Activated T-helper 1 cell treated with anti-CD3 and anti-CD28 coated beads, Interleukin-12 subunit alpha, Interleukin-12 subunit beta, Interleukin-2, Interleukin-4 antibody, amounts not matched to agents 30 ng/mL and 10 ng/mL and 1 ng/mL, durations not matched to agents 14 hours and 24 hours and 36 hours (primary cell): ENCODE measurements at regions of chr11 and their contacts with region 1.

Region 1: GRCh38 chr11:506238-506994 is 626 bp downstream of the RNH1 start:
- DNase-seq: peak; percentile 97
- H3K4me3 Mint-ChIP-seq: peak overlapping the region; percentile 92
- H3K27ac Mint-ChIP-seq: peak overlapping the region; percentile 100
- H3K4me1 Mint-ChIP-seq: peaks cover 15% of the 10 kb centered on the region
- H3K27me3 Mint-ChIP-seq: no peaks in the 10 kb centered on the region

Region 2: DNA sequence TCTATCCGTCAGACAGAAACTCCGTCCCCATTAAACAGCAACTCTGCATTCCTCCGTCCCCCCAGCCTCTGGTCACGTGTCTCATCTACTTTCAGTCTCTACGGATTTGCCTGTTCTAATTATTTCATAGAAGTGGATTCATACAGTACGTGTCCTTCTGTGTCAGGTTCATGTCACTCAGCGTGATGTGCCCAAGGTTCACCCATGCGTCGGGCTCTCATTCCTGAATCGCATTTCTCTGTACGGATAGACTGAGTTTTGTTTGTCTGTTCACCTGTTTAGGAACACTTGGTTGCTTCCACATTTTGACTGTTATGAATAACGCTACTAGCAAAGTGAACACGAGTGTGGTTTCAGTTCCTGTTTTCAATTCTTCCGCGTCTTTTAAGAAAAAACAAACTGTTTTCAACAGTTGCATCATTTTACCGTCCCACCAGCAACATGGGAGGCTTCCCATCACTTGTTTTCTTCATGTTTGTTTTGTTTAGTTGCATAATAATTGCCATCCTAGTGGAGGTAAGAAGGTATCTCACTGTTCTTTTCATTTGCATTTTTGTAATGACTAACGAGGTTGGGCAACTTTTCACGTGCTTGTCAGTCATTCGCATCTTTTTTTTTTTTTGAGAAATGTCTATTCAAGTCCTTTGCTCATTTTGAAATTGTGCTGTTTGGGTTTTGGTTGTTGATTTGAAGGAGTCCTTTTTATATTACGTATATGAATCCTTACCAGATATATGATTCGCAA is 237.1 kb before region 1 on chr11:
- intact Hi-C with region 1: loop called (anchors 2 kb)
- DNase-seq: peak; percentile 53
- H3K4me3 Mint-ChIP-seq: peak overlapping the region; percentile 88
- H3K27ac Mint-ChIP-seq: peak overlapping the region; percentile 97
- H3K4me1 Mint-ChIP-seq: peaks cover 31% of the 10 kb centered on the region
- H3K27me3 Mint-ChIP-seq: peaks cover 6% of the 10 kb centered on the region

Region 3: GRCh38 chr11:373716-374551 is 132.5 kb before region 1 on chr11:
- intact Hi-C with region 1: no loop called
- DNase-seq: no peak
- H3K4me3 Mint-ChIP-seq: no peak overlapping the region
- H3K27ac Mint-ChIP-seq: no peak overlapping the region
- H3K4me1 Mint-ChIP-seq: no peaks in the 10 kb centered on the region
- H3K27me3 Mint-ChIP-seq: peaks cover 16% of the 10 kb centered on the region

Region 4: GRCh38 chr11:416757-417621 is 89.4 kb before region 1 on chr11:
- intact Hi-C with region 1: loop called (anchors 1 kb)
- DNase-seq: peak; percentile 48
- H3K4me3 Mint-ChIP-seq: peak overlapping the region; percentile 65
- H3K27ac Mint-ChIP-seq: peak overlapping the region; percentile 44
- H3K4me1 Mint-ChIP-seq: peaks cover 30% of the 10 kb centered on the region
- H3K27me3 Mint-ChIP-seq: no peaks in the 10 kb centered on the region

Region 5: DNA sequence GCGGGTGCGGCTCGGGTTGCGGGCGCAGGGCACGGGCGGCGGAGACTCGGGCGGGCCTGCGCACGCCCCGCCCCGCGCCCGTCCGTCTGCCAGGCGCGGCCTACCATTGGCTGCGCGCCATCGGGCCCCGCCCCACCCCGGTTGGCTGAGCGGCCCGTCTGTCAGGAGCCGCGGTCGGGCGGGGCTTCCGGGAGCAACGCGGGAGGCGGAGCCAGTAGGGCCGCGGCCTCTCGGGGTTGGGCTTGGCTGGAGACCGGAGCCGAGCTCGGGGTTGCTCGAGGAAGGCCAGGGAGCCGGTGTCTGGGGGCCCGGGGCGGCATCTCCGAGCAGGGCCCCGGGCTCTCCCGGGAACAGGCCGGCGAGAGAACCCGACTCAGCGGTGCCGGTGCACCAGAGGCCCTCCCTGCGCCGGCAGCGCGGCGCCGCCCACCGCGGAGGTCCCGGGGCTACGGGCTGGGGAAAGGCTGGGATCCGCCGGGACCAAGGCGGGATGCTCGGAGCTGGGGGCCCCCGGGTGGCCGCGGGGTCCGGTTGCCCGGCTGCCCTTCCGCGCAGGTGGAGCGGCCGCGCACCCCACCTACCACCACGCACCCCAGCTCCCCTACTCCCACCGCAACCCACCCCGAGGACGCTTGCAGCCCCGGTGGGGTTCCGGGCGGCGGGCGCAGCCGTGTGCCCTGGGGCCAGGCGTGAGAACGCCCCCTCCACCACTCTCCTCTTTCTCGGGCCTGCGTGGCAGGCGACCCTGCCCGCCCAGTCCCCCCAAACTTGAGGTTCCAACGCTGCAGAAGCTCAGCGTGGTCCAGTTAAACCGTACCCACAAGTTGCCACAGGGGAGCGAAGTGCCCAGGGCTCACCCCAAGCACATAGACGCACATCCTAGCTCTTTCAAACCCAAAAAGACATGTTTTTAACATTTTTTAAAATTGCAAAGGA is 29.4 kb after region 1 on chr11 and contains the start of gene HRAS:
- intact Hi-C with region 1: loop called (anchors 1 kb)
- DNase-seq: peak; percentile 97
- H3K4me3 Mint-ChIP-seq: peak within 1 kb of the TSS; percentile 87
- H3K27ac Mint-ChIP-seq: peak within 1 kb of the TSS; percentile 89
- H3K4me1 Mint-ChIP-seq: peaks cover 9% of the 10 kb centered on the region
- H3K27me3 Mint-ChIP-seq: no peaks in the 10 kb centered on the region
- total RNA-seq, gene HRAS: 76.6 and 88.7 TPM in 2 replicates

Region 6: DNA sequence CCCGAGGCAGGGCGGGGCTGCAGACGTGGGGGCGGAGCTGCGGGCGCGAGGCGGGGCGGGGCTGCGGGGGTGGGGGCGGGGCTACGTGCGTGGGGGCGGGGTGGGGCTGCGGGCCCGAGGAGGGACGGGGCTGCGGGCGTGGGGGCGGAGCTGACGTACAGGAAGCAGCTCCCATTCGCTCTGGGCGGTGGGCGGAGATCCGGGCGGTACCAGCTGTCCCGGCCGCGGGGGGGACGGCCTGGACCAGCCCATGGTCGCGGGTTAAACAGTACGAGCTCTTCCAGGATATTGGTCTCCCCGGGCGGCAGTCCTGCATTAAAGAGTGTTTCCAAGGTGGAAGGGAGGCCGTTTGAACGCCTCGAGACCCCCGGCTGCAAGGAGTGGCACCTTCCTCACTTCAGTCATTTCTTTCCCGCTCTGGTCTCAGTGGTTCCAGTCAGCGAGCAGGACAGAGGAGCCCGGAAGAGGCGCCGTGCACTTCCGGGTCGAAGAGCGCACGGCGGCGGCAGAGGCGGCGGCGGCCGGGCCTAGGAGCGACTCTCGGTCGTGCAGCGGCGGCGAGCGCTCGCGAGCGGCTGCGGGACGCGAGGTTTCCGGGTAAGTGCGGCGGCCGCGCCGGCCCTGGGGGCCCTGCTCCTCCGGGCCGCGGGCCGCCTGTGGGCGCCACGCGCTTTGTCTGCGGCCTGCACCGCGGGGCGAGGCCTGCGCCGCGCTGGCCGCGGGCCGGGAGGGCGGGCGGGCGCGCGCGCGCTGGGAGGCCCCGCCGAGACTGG is 69.8 kb after region 1 on chr11 and contains the start of gene PHRF1:
- intact Hi-C with region 1: loop called (anchors 1 kb)
- DNase-seq: peak; percentile 91
- H3K4me3 Mint-ChIP-seq: peak within 1 kb of the TSS; percentile 94
- H3K27ac Mint-ChIP-seq: peak within 1 kb of the TSS; percentile 100
- H3K4me1 Mint-ChIP-seq: peaks cover 41% of the 10 kb centered on the region
- H3K27me3 Mint-ChIP-seq: peaks cover 15% of the 10 kb centered on the region
- total RNA-seq, gene PHRF1: 58.6 and 59.8 TPM in 2 replicates

Region 7: DNA sequence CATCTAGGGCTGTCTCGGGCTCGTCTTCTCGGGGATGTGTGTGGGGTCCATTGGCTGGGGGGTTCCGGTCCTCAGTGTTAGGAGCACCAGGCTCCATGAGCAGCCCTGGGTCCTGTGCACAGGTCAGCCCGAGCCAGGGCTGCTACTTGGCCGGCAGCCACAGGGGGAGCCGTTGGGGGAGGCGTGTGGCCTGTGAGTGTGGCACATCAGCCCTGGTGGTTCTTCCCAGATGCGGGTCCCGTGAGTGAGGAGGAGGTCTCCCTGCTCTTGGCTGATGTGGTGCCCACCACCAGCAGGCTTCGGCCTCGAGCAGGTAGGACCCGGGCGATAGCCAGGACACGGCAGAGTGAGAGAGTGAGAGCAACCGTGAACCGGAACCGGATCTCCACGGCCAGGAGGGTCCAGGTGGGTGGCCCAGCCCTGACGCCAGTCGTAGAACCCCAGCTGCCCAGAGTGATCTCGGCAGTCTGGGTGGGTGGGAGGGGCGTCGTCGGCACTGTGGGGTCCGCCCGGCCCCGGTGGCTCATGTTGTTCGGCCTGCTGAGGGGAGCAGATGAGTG is 90.8 kb after region 1 on chr11:
- intact Hi-C with region 1: no loop called
- DNase-seq: no peak
- H3K4me3 Mint-ChIP-seq: no peak overlapping the region
- H3K27ac Mint-ChIP-seq: no peak overlapping the region
- H3K4me1 Mint-ChIP-seq: peaks cover 7% of the 10 kb centered on the region
- H3K27me3 Mint-ChIP-seq: no peaks in the 10 kb centered on the region